Thyroid gland (tissue), 4 donors: ENCODE measurements at regions of chr21 and their contacts with region 1.

Region 1: DNA sequence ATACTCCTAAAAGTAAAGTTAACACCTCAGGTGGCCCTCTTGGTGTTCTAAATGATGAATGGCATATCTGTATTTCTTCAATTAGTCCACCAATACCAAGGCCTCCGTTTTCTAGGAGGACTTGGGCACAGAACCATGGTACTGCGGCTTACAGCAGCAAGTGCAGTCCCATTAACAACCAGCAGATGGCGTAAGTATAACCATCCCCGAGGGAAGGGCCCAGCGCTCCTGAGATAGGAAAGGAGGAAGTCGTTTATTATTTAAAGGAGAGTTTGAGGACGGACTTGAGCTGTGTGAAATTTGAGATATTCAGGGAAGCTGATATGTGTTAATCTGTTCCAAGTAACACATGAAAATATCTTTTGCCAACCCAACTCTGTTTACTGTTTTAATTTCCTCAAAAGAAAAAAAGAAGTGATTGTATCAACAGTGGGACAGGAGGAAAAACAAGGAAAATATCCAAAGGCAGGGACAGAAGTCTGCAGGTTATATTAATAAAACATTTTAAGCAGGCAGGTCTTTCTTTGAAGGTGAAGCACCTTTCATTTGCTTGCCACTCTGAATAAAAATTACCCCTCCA is 37.7 kb upstream of the KCNJ15 start:
- DNase-seq: peak; percentile 72 to 80
- H3K4me3 ChIP-seq: no peak overlapping the region
- H3K27ac ChIP-seq: peak overlapping the region; percentile 7 to 57 (median 47)
- H3K4me1 ChIP-seq: peaks cover 0 to 9% of the 10 kb centered on the region in 2 donors
- H3K27me3 ChIP-seq: no peaks in the 10 kb centered on the region
- CTCF ChIP-seq: peak; percentile 89 to 99 (median 97)
- POLR2A ChIP-seq: no peak

Region 2: GRCh38 chr21:38159355-38159754 is 59.8 kb before region 1 on chr21:
- intact Hi-C with region 1: loop called (anchors 5 kb)
- DNase-seq: peak; percentile 70 to 77
- H3K4me3 ChIP-seq: no peak overlapping the region
- H3K27ac ChIP-seq: no peak overlapping the region
- H3K4me1 ChIP-seq: no peaks in the 10 kb centered on the region
- H3K27me3 ChIP-seq: no peaks in the 10 kb centered on the region
- CTCF ChIP-seq: peak; percentile 40 to 86 (median 82)
- POLR2A ChIP-seq: no peak